AG04449 (cell line): ENCODE measurements at regions of chr10 and their contacts with region 1.

Region 1: DNA sequence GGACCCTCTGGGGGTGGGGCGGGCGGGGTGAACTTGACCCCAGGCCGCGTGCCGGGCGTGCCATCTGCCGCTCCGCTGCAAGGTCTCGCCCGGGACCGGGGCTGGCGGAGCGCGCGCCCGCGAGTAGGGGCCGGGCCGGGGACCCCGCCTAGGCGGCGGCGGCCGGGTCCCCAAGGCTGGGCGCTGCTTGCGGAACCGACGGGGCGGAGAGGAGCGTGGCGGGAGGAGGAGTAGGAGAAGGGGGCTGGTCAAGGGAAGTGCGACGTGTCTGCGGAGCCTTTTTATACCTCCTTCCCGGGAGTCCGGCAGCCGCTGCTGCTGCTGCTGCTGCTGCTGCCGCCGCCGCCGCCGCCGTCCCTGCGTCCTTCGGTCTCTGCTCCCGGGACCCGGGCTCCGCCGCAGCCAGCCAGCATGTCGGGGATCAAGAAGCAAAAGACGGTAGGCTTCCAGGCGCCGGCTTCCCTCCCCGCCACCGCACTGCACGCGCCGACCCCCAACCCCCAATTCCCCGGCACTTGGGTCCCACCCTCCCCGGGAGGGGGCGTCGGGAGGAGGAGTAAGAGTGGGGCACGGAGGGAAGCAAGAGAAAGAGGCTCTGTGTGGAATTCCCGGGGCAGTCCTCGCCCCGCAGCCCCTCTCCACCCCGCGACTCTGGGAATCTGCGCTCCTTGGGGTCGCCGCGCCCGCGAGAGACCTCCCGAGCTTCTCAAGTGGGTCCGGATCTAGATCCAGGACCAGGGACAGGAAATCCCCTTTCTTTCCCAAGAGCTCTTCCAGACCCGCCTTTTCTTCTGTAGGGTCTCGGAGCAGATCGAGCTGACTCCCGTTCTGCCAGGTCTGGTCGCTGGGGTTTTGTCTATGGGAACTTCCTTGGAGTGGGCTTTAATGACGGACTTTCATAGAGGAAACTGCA is at the start of gene PAPSS2:
- DNase-seq: no peak
- H3K4me3 ChIP-seq: peak within 1 kb of the TSS; percentile 78
- CTCF ChIP-seq: peak; percentile 23

Region 2: GRCh38 chr10:87531908-87532622 is 127.8 kb before region 1 on chr10:
- CTCF ChIA-PET with region 1: interaction called, 13 read pairs
- POLR2A ChIA-PET with region 1: no interaction called
- DNase-seq: no peak
- H3K4me3 ChIP-seq: no peak overlapping the region
- CTCF ChIP-seq: no peak

Region 3: DNA sequence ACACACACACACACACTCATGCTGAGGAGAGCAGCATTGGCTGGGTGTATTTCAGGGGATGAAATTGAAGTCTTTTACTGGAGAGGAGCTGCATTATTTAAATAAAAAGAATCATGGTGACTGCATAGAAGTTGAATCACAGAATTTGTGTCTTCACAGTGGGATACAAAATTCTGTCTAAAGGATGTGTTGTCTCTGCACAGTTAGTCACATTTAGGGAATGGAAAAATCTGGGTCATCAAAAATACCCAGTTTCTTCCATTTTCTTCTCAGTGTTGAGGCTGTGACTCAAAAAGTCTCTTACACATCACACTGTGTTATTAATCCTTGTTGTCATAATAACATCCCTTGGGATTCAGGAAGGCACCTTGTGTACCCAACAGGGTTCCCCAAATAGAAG is 10.8 kb after region 1 on chr10:
- CTCF ChIA-PET with region 1: interaction called, 17 read pairs
- POLR2A ChIA-PET with region 1: interaction called, 7 read pairs
- DNase-seq: no peak
- H3K4me3 ChIP-seq: no peak overlapping the region
- CTCF ChIP-seq: no peak

Region 4: GRCh38 chr10:87684001-87684638 is 24.3 kb after region 1 on chr10:
- CTCF ChIA-PET with region 1: no interaction called
- POLR2A ChIA-PET with region 1: no interaction called
- DNase-seq: no peak
- H3K4me3 ChIP-seq: no peak overlapping the region
- CTCF ChIP-seq: no peak

Region 5: GRCh38 chr10:87734987-87735827 is 75.4 kb after region 1 on chr10:
- CTCF ChIA-PET with region 1: interaction called, 64 read pairs
- POLR2A ChIA-PET with region 1: no interaction called
- DNase-seq: no peak
- H3K4me3 ChIP-seq: no peak overlapping the region
- CTCF ChIP-seq: peak; percentile 44

Region 6: GRCh38 chr10:87771871-87772500 is 112.2 kb after region 1 on chr10:
- CTCF ChIA-PET with region 1: interaction called, 10 read pairs
- POLR2A ChIA-PET with region 1: no interaction called
- DNase-seq: no peak
- H3K4me3 ChIP-seq: no peak overlapping the region
- CTCF ChIP-seq: peak; percentile 11

Region 7: GRCh38 chr10:88027570-88027969 is 367.7 kb after region 1 on chr10:
- CTCF ChIA-PET with region 1: no interaction called
- POLR2A ChIA-PET with region 1: no interaction called
- DNase-seq: no peak
- H3K4me3 ChIP-seq: no peak overlapping the region
- CTCF ChIP-seq: no peak